ENCODE measurements at regions of chrX and their contacts with region 1.

Region 1: GRCh38 chrX:49120099-49120498 is 3.4 kb downstream of the GPKOW start:
- DNase-seq: no peak
- ATAC-seq: no peak
- H3K4me3 ChIP-seq: no peak overlapping the region
- H3K27ac ChIP-seq: no peak overlapping the region
- H3K4me1 ChIP-seq: peaks cover 0 to 14% (median 2%) of the 10 kb centered on the region in 9 donors
- H3K27me3 ChIP-seq: peaks cover 0 to 4% (median 0%) of the 10 kb centered on the region in 7 donors
- CTCF ChIP-seq: no peak

Region 2: DNA sequence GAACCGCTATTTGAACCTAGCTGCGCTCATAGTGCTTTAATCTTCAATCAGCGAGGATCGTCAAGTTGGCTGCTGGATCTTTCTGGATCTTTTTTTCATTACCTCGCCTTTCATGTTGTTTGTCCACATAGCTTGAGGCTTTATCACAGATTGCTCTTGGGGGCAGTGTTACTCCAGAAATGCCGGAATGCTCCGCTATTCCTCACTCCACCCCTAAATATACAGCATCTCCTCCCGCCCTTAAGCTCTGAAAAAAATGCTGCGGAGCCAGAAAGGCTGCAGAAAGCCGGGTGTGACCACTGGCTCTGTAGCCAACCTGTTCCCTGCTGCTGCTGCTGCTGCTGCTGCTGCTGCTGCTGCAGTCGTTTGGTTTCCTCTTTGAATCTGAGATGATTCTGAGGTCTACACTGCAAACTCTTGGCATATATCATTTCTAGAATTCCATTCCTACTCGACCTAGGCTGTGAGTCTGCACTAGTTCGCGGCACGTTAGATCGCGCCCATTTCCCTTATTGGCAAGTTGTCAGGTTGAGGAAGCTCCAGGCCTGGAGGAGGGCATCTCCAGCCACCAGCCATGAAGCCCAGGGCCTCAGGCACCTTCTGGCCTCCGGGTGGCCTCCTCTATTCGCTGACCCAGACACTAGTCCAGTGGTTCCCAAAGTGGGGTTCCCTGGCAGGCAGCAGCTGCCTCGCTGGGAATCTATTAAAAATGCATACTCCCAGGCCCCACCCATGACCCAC is 488.6 kb before region 1 on chrX:
- intact Hi-C with region 1: no loop called
- DNase-seq: peak; percentile 38 to 88
- ATAC-seq: peak; percentile 91 to 99 (median 98)
- H3K4me3 ChIP-seq: peak overlapping the region in 6 of 10 donors; percentile 2 to 20 (median 11)
- H3K27ac ChIP-seq: no peak overlapping the region
- H3K4me1 ChIP-seq: peaks cover 0 to 13% (median 0%) of the 10 kb centered on the region in 9 donors
- H3K27me3 ChIP-seq: no peaks in the 10 kb centered on the region
- CTCF ChIP-seq: peak in 7 of 9 donors; percentile 41 to 63 (median 55)

Region 3: GRCh38 chrX:49155900-49156837 is 36.1 kb after region 1 on chrX:
- intact Hi-C with region 1: loop called in 1 of 10 experiments (anchors 5 kb)
- DNase-seq: peak; percentile 88 to 92
- ATAC-seq: peak; percentile 95 to 98 (median 96)
- H3K4me3 ChIP-seq: peak overlapping the region; percentile 14 to 70 (median 64)
- H3K27ac ChIP-seq: peak overlapping the region; percentile 86 to 98 (median 94)
- H3K4me1 ChIP-seq: peaks cover 0 to 7% (median 0%) of the 10 kb centered on the region in 9 donors
- H3K27me3 ChIP-seq: no peaks in the 10 kb centered on the region
- CTCF ChIP-seq: peak; percentile 55 to 89 (median 77)

Region 4: GRCh38 chrX:49163555-49164419 is 43.7 kb after region 1 on chrX:
- intact Hi-C with region 1: loop called in 2 of 10 experiments (anchors 5 kb)
- DNase-seq: peak; percentile 88 to 89
- ATAC-seq: peak; percentile 64 to 83 (median 78)
- H3K4me3 ChIP-seq: peak overlapping the region in 9 of 10 donors; percentile 17 to 58 (median 51)
- H3K27ac ChIP-seq: peak overlapping the region; percentile 87 to 96 (median 93)
- H3K4me1 ChIP-seq: peaks cover 0 to 29% (median 11%) of the 10 kb centered on the region in 9 donors
- H3K27me3 ChIP-seq: no peaks in the 10 kb centered on the region
- CTCF ChIP-seq: peak; percentile 58 to 84 (median 76)

Region 5: GRCh38 chrX:49884290-49884862 is 764.3 kb after region 1 on chrX:
- intact Hi-C with region 1: no loop called
- DNase-seq: peak; percentile 34 to 59
- ATAC-seq: peak in 3 of 8 donors; percentile 42 to 56 (median 53)
- H3K4me3 ChIP-seq: no peak overlapping the region
- H3K27ac ChIP-seq: no peak overlapping the region
- H3K4me1 ChIP-seq: peaks cover 0 to 14% (median 4%) of the 10 kb centered on the region in 9 donors
- H3K27me3 ChIP-seq: peaks cover 0 to 7% (median 0%) of the 10 kb centered on the region in 7 donors
- CTCF ChIP-seq: peak; percentile 13 to 84 (median 65)

Measured in heart right ventricle (tissue), 16 donors.